Activated CD4-positive, alpha-beta T cell treated with anti-CD3 and anti-CD28 coated beads for 36 hours (primary cell): ENCODE measurements at regions of chr10 and their contacts with region 1.

Region 1: GRCh38 chr10:50636618-50637579 is 13.1 kb upstream of the SGMS1 start:
- DNase-seq: peak; percentile 47
- ATAC-seq: peak; percentile 95
- H3K4me3 Mint-ChIP-seq: peak overlapping the region; percentile 9
- H3K27ac Mint-ChIP-seq: peak overlapping the region; percentile 24
- H3K4me1 Mint-ChIP-seq: peaks cover 28% of the 10 kb centered on the region
- H3K27me3 Mint-ChIP-seq: peaks cover 24% of the 10 kb centered on the region

Region 2: DNA sequence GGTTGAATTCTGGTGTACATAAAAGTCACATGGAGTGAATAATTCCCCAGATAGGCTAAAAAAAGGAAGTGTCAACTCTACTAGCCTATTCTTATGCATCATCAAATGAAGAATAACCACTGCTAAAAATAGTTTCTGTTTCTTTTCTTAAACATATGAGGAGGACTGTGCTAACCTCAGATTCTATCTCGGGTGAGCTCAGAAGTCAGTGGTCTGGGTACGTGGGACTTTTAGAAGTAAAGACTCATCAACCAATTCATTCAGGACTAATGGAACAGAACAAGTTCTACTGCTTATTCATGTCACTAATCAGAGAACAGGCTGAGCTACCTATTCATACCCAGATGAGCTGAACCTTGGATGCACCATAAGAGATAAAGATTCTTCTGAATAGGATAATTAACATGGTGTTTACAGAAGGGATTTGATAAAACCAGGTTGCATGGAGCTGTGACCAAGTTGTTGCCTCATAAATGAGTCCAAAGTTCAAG is 376.1 kb before region 1 on chr10:
- CTCF ChIA-PET with region 1: no interaction called
- POLR2A ChIA-PET with region 1: no interaction called
- intact Hi-C with region 1: loop called in 1 of 2 experiments (anchors 2 kb)
- DNase-seq: peak; percentile 18
- ATAC-seq: peak; percentile 94
- H3K4me3 Mint-ChIP-seq: no peak overlapping the region
- H3K27ac Mint-ChIP-seq: no peak overlapping the region
- H3K4me1 Mint-ChIP-seq: peaks cover 6% of the 10 kb centered on the region
- H3K27me3 Mint-ChIP-seq: peaks cover 23% of the 10 kb centered on the region

Region 3: GRCh38 chr10:50508315-50509051 is 128.4 kb before region 1 on chr10:
- CTCF ChIA-PET with region 1: no interaction called
- POLR2A ChIA-PET with region 1: interaction called, 5 read pairs
- intact Hi-C with region 1: loop called (anchors 1 kb)
- DNase-seq: peak; percentile 61
- ATAC-seq: peak; percentile 56
- H3K4me3 Mint-ChIP-seq: no peak overlapping the region
- H3K27ac Mint-ChIP-seq: no peak overlapping the region
- H3K4me1 Mint-ChIP-seq: peaks cover 68% of the 10 kb centered on the region
- H3K27me3 Mint-ChIP-seq: peaks cover 3% of the 10 kb centered on the region

Region 4: GRCh38 chr10:51117794-51118193 is 480.9 kb after region 1 on chr10:
- CTCF ChIA-PET with region 1: no interaction called
- POLR2A ChIA-PET with region 1: no interaction called
- intact Hi-C with region 1: no loop called
- DNase-seq: no peak
- ATAC-seq: no peak
- H3K4me3 Mint-ChIP-seq: no peak overlapping the region
- H3K27ac Mint-ChIP-seq: no peak overlapping the region
- H3K4me1 Mint-ChIP-seq: no peaks in the 10 kb centered on the region
- H3K27me3 Mint-ChIP-seq: no peaks in the 10 kb centered on the region